GM10248 (cell line): ENCODE measurements at regions of chr1 and their contacts with region 1.

Region 1: DNA sequence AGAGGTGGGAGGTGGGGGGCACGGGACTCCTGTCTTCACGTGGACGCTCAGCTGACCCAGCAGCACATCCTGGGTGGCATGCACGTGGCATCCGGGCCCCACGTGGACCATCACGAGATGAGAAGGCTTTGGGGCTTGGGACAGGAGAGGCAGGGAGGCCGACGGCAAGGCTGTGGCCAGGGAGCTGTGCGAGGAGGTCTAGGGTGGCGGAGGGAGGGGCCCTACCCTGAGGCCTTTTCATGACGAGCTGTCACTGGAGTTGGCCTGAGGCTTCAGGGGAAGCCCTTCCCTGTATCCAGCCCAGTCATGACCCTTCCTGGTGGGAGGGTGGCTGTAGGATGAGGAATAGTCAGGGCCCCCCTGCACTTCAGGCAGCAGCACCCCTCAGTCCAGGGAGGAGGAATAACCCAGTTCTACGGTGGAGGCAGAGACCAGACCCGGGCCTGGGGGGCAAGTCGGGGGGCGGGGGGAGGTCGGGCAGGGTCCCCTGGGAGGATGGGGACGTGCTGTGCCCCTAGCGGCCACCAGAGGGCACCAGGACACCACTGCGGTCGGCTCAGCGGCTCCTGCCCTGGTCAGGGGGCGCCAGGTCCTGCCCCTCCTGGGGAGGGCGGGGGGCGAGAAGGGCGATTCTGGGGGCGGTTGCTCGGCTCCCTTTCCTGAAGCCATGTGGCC is 2.0 kb upstream of the PERM1 start:
- DNase-seq: peak; percentile 85
- CTCF ChIP-seq: peak; percentile 85

Region 2: GRCh38 chr1:904310-904950 is 79.5 kb before region 1 on chr1:
- CTCF ChIA-PET with region 1: interaction called, 17 read pairs
- POLR2A ChIA-PET with region 1: no interaction called
- DNase-seq: peak; percentile 91
- CTCF ChIP-seq: peak; percentile 95

Region 3: DNA sequence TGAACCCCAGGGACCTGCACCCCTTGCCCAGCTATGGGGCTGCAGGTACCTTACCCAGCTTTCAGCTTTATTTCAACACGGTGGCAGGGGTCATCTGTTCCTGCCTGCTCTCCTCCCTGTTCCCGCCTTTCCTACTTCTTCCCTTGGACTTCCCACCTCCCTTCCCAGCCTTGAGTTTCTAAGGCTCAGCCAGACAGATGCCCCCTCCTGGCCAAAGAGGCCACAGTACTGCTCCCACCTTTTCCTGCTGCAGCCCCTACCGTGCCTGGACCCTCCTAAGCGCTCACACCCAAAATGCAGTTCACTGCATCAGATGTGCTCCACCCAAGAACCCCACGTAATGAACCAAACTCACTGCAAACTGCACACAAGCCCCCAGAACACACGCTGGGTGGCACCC is 32.6 kb before region 1 on chr1:
- CTCF ChIA-PET with region 1: no interaction called
- POLR2A ChIA-PET with region 1: no interaction called
- DNase-seq: no peak
- CTCF ChIP-seq: peak; percentile 26

Region 4: DNA sequence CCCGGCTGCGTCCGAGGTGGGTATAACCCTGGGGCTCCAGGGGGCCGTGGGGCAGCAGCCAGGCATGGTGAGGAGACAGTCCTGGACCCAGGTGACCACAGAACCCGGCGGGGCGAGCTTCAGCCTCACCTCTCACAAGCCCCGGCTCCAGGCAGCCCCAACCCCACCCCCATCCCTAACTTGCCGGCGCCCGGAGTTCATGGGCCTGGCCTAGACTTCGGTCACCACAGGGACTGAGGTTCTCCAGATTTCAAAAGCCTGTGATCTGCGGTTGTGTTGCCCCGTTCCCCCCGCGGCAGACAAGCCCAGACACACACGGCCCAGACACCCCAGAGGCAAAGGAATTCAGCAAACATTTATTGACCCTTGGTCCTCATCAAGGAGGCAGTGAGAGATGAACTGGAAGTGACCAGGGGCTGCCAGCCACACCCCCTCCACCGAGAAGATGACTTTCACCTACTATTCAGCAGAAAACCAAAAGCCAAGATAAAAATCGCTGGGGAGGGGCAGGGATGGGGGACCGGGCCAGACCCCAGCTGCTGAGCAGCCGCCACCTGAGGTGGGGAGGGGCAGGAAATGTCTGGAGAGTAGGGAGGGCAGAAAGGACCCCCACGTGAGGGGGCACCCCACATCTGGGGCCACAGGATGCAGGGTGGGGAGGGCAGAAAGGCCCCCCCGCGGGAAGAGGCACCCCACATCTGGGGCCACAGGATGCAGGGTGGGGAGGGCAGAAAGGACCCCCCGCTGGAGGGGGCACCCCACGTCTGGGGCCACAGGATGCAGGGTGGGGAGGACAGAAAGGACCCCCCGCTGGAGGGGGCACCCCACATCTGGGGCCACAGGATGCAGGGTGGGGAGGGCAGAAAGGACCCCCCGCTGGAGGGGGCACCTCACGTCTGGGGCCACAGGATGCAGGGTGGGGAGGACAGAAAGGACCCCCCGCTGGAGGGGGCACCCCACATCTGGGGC is 12.0 kb after region 1 on chr1:
- CTCF ChIA-PET with region 1: interaction called, 54 read pairs
- POLR2A ChIA-PET with region 1: no interaction called
- DNase-seq: no peak
- CTCF ChIP-seq: no peak

Region 5: DNA sequence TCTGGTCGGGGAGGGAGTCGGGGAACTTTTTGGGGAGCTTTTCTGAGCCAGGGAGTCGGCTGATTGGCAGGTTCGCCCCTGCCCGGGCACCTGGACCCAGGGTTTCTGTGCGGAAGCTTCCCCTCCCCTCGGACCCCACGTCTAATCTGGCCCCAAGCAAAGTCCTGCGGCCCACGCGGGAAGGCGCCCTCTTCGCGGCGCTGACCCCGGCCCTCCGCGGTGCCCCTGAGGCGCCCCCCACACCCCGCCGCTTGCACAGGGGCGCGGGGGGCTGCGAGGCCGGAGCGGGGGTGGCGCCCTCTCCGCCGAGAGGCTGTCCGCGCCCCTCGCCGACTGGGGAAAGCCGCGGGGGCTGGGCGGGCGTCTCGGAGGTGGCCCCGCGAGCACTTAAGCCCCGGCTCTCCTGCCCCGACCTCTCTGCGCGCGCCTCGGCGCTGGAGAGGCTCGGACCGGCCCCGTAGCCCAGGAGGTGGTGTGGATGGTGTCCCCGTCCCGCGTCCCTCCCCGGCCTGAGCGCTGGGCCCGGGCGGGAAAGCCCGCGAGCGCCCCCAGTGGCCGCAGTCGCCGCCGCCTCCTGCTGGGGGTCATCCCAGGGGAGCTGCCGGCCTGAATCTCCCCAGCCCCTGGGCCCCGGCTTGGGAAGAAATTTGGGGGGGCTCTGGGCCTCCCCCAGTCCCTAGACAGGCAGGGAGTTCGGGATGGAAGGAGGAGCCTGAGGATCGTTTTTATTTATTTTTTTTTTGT is 17.7 kb after region 1 on chr1:
- CTCF ChIA-PET with region 1: interaction called, 54 read pairs
- POLR2A ChIA-PET with region 1: no interaction called
- DNase-seq: peak; percentile 90
- CTCF ChIP-seq: peak; percentile 93

Region 6: GRCh38 chr1:1033009-1033587 is 49.2 kb after region 1 on chr1:
- CTCF ChIA-PET with region 1: interaction called, 12 read pairs
- POLR2A ChIA-PET with region 1: no interaction called
- DNase-seq: peak; percentile 97
- CTCF ChIP-seq: peak; percentile 90

Region 7: GRCh38 chr1:1059494-1060280 is 75.8 kb after region 1 on chr1:
- CTCF ChIA-PET with region 1: interaction called, 53 read pairs
- POLR2A ChIA-PET with region 1: no interaction called
- DNase-seq: peak; percentile 98
- CTCF ChIP-seq: no peak

Region 8: GRCh38 chr1:1250786-1251284 is 266.9 kb after region 1 on chr1:
- CTCF ChIA-PET with region 1: interaction called, 18 read pairs
- POLR2A ChIA-PET with region 1: no interaction called
- DNase-seq: peak; percentile 83
- CTCF ChIP-seq: no peak